Activated CD4-positive, alpha-beta T cell treated with anti-CD3 and anti-CD28 coated beads, Interleukin-2, amount 10 ng/mL, durations not matched to agents 7 days and 5 days (primary cell): ENCODE measurements at regions of chr5 and their contacts with region 1.

Region 1: DNA sequence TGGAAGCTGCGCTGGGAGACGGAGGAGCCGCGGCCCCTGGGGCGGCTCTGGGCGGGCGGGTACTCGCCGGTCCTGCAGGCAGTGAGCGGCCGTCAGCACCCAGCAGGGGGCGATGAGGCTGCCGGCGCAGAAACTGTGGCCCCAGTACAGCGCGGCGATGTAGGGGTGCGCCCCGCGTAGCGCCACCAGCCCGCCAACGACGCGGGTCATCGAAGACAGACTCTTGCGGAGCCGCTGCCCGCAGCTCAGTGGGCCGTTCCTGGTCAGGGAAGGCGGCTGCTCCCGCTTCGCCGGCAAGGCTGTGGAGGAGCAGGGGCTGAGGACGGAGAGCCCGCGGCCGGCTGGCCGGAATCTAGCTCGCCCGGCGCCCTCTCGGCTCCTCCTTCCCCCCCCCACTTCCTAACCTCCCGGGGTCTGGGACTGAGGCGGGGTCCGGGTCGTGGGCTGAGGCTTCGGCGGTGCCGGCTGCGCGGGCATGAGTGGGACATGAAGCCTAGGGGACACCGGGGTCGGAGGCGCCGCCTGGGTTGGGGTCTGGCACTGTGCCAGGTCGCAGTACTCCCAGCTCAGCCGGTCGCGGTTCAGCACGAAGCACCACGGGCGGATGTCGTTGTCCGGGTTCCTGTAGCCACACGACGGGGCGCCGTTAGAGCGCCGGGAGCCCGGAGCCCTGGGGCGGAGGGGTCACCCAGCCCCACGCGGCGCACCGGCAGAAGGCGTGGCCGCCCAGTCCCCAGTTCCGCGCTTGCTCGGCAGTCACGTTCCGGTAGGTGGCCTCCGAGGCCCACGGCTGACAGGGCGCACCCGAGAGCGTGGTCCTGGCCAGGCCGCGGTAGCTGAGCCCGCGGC is 3.6 kb upstream of the PFN3 start:
- DNase-seq: peak; percentile 87
- H3K4me3 Mint-ChIP-seq: peak overlapping the region; percentile 64
- H3K27ac Mint-ChIP-seq: peak overlapping the region; percentile 36
- H3K4me1 Mint-ChIP-seq: peaks cover 36% of the 10 kb centered on the region
- H3K27me3 Mint-ChIP-seq: peaks cover 30% of the 10 kb centered on the region

Region 2: GRCh38 chr5:177113566-177114424 is 290.2 kb before region 1 on chr5:
- CTCF ChIA-PET with region 1: interaction called, 21 read pairs
- POLR2A ChIA-PET with region 1: no interaction called
- DNase-seq: peak; percentile 81
- H3K4me3 Mint-ChIP-seq: no peak overlapping the region
- H3K27ac Mint-ChIP-seq: peak overlapping the region; percentile 68
- H3K4me1 Mint-ChIP-seq: peaks cover 37% of the 10 kb centered on the region
- H3K27me3 Mint-ChIP-seq: no peaks in the 10 kb centered on the region

Region 3: GRCh38 chr5:177317959-177318377 is 86.0 kb before region 1 on chr5:
- CTCF ChIA-PET with region 1: interaction called, 14 read pairs
- POLR2A ChIA-PET with region 1: no interaction called
- DNase-seq: peak; percentile 82
- H3K4me3 Mint-ChIP-seq: no peak overlapping the region
- H3K27ac Mint-ChIP-seq: no peak overlapping the region
- H3K4me1 Mint-ChIP-seq: peaks cover 52% of the 10 kb centered on the region
- H3K27me3 Mint-ChIP-seq: no peaks in the 10 kb centered on the region

Region 4: GRCh38 chr5:177370488-177371119 is 33.4 kb before region 1 on chr5:
- CTCF ChIA-PET with region 1: interaction called, 31 read pairs
- POLR2A ChIA-PET with region 1: no interaction called
- DNase-seq: peak; percentile 56
- H3K4me3 Mint-ChIP-seq: peak overlapping the region; percentile 36
- H3K27ac Mint-ChIP-seq: peak overlapping the region; percentile 36
- H3K4me1 Mint-ChIP-seq: peaks cover 66% of the 10 kb centered on the region
- H3K27me3 Mint-ChIP-seq: no peaks in the 10 kb centered on the region

Region 5: GRCh38 chr5:177425801-177426565 is 22.0 kb after region 1 on chr5:
- CTCF ChIA-PET with region 1: interaction called, 304 read pairs
- POLR2A ChIA-PET with region 1: no interaction called
- DNase-seq: peak; percentile 100
- H3K4me3 Mint-ChIP-seq: peak overlapping the region; percentile 97
- H3K27ac Mint-ChIP-seq: peak overlapping the region; percentile 93
- H3K4me1 Mint-ChIP-seq: peaks cover 48% of the 10 kb centered on the region
- H3K27me3 Mint-ChIP-seq: no peaks in the 10 kb centered on the region